AG04450 (cell line): ENCODE measurements at regions of chr12 and their contacts with region 1.

Region 1: DNA sequence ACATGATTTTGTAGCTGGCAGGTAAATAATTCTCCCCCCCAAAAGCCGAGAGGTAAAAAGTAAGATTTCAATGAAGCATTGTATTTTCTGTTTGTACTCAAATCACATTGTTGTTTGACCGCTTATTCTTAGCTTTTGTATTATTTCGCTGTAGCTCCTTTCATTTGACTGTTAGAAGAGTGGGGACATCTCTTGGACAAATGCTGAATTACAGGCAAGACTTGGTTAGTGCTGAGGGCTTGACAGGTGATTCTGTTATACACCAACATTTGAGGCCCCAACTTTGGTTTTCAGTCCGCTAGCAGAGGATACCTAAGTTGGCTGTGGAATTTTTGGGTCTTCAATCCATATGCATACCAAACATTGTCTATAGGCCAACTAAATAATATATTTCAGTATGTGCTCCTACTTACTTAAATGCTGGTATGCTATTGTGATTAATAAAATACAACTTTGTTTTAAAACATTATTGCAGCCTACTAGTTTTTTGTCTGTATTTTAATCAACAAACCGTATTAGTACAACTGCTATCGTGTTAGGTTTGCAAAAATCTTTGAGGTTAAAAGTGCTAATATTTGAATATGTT is 102.2 kb downstream of the ERC1 start:
- DNase-seq: peak; percentile 24
- H3K4me3 ChIP-seq: no peak overlapping the region
- H3K27ac ChIP-seq: no peak overlapping the region
- H3K27me3 ChIP-seq: no peaks in the 10 kb centered on the region
- CTCF ChIP-seq: peak; percentile 86

Region 2: GRCh38 chr12:823028-823698 is 270.1 kb before region 1 on chr12:
- CTCF ChIA-PET with region 1: interaction called, 26 read pairs
- POLR2A ChIA-PET with region 1: no interaction called
- DNase-seq: no peak
- H3K4me3 ChIP-seq: no peak overlapping the region
- H3K27ac ChIP-seq: no peak overlapping the region
- H3K27me3 ChIP-seq: no peaks in the 10 kb centered on the region
- CTCF ChIP-seq: no peak

Region 3: DNA sequence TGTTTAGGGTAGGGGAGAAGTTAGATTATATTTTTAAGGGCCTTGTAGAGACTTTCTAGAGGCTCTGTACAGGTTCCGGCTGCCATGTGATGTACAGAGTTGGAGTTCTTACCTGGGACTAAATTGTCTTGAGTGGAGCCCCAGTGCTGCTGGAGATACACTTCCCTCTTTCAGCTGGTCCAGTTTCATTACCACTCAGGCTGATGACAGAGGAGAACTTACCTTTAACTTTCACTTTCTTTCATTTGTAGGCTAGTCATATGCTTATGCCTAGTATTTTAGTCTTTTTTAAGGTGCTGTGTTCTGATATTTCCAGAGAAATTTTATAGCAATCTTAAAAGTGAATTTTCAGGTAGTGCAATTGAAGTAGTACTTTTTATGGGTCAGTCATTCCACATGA is 15.0 kb after region 1 on chr12:
- CTCF ChIA-PET with region 1: interaction called, 15 read pairs
- POLR2A ChIA-PET with region 1: interaction called, 3 read pairs
- DNase-seq: no peak
- H3K4me3 ChIP-seq: no peak overlapping the region
- H3K27ac ChIP-seq: no peak overlapping the region
- H3K27me3 ChIP-seq: no peaks in the 10 kb centered on the region
- CTCF ChIP-seq: no peak